HCT116 (cell line): ENCODE measurements at regions of chr1 and their contacts with region 1.

Region 1: DNA sequence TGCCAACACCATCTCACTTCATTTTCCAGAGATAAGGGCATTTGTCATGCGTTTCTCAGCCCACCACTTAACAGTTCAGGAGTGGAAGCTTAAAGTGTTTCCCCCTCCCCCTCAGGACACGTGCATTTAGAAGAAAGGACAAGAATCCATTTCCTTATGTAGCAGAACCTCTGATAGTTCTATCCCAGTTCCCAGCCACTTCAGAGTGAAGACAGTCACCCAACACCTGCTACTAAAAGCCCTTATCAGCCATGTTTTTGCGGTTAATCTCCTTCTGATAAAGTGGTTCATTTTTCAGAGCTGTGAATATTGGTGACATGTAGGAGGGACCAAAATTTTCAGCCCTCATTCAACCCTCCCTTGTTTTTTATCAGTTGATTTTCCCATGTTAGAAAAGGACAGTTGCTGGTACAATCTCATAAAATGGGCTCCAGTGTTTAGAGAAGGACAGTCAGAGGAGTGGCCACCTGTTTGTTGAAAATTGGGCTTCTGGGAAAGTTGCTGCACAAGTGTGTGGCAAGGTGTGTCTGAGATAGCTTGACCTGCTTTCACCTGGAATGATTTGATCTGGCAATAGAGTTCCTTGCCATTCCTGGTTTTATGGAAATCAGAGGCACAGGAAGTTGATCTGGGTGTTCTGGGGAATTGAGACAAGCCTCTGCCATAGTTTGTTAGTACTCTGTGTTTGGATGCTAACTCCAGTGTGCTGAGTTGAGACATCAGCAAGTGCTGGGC is 114.0 kb downstream of the PPP1R12B start:
- DNase-seq: no peak
- ATAC-seq: no peak
- H3K4me3 ChIP-seq: no peak overlapping the region
- H3K27ac ChIP-seq: no peak overlapping the region
- H3K4me1 ChIP-seq: peaks cover 0 to 28% of the 10 kb centered on the region in 2 experiments; a peak in 2 of 4 replicates
- H3K27me3 ChIP-seq: no peaks in the 10 kb centered on the region
- CTCF ChIP-seq: no peak
- POLR2A ChIP-seq: no peak
- RAD21 ChIP-seq: no peak

Region 2: DNA sequence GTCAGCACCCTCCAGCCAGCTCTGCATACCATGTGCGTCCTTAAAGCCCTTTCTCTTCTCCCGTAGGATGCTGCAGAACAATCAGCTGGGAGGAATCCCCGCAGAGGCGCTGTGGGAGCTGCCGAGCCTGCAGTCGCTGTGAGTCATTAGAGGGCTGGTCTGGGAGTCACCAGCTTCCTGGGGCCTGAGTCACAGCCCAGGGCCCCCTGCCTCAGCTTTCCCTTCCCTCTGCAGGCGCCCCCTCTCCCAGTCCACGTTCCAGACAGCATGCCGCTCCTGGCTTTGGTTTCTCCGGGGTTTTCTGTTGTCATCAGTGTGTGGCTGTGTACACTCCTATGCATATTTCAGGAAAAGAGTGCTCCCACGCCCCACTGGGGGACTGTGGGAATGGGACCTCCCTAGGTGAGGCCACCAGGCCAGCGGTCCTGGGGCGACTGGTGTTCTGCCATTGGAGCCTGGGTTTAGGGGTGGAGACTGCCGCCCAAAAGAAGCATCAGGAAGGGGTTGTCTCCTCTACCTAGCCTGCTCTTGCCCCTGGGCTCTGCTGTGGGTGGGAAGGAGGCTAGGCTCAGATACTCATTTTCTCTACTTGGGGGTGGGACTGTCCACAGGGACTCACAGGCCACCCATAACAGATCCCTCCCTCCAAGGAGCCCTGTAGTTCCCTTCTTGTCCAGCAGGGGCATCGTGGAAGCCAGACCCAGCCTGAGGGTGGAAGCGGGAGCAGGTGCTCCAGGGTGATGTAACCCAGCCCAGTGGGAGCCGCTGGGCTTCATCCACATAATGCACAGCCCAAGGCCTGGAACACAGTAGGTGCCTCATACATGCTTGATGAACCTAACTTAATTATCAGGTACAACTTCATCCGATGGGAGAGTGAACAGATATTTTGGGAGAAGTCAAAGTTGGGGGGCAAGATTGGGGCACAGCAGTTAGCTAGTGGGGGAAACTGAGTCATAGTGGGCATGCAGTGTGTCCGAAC is 226.4 kb before region 1 on chr1:
- CTCF ChIA-PET with region 1: no interaction called
- POLR2A ChIA-PET with region 1: no interaction called
- RAD21 ChIA-PET with region 1: no interaction called
- intact Hi-C with region 1: no loop called
- DNase-seq: peak; percentile 86
- ATAC-seq: peak; percentile 87
- H3K4me3 ChIP-seq: peak overlapping the region; percentile 26 to 46
- H3K27ac ChIP-seq: peak overlapping the region; percentile 37
- H3K4me1 ChIP-seq: peaks cover 25 to 30% of the 10 kb centered on the region in 2 experiments
- H3K27me3 ChIP-seq: peaks cover 12% of the 10 kb centered on the region; the same call in 1 of the 2 replicates
- CTCF ChIP-seq: peak; percentile 64 to 98 (median 95)
- POLR2A ChIP-seq: no peak
- RAD21 ChIP-seq: peak; percentile 35; the same call in 1 of the 2 replicates

Region 3: DNA sequence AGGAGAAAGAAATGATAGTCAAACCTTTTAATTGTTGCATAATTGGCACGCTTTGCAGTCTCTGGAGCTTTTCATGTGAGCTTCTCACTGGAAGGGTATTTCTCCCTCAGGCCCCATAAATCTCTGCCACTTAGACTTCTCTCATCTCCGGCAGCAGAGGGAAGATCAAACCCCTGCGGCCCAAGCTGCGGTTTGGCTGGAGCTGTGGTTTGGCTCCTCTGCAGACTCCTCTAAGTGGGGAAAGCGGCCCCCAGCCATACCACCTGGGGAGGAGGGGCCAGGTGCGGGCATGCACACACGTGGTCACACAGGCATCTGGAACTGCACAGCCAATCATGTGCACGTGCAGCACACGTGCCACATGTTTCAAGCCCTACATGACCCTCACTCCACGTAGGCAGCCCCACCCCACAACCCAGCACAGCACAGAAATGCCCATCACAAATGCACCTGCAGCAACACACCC is 179.1 kb before region 1 on chr1:
- CTCF ChIA-PET with region 1: no interaction called
- POLR2A ChIA-PET with region 1: no interaction called
- RAD21 ChIA-PET with region 1: no interaction called
- intact Hi-C with region 1: no loop called
- DNase-seq: peak; percentile 27
- ATAC-seq: peak; percentile 89
- H3K4me3 ChIP-seq: no peak overlapping the region
- H3K27ac ChIP-seq: no peak overlapping the region
- H3K4me1 ChIP-seq: peaks cover 13 to 16% of the 10 kb centered on the region in 2 experiments
- H3K27me3 ChIP-seq: peaks cover 85% of the 10 kb centered on the region
- CTCF ChIP-seq: no peak
- POLR2A ChIP-seq: no peak
- RAD21 ChIP-seq: no peak

Region 4: DNA sequence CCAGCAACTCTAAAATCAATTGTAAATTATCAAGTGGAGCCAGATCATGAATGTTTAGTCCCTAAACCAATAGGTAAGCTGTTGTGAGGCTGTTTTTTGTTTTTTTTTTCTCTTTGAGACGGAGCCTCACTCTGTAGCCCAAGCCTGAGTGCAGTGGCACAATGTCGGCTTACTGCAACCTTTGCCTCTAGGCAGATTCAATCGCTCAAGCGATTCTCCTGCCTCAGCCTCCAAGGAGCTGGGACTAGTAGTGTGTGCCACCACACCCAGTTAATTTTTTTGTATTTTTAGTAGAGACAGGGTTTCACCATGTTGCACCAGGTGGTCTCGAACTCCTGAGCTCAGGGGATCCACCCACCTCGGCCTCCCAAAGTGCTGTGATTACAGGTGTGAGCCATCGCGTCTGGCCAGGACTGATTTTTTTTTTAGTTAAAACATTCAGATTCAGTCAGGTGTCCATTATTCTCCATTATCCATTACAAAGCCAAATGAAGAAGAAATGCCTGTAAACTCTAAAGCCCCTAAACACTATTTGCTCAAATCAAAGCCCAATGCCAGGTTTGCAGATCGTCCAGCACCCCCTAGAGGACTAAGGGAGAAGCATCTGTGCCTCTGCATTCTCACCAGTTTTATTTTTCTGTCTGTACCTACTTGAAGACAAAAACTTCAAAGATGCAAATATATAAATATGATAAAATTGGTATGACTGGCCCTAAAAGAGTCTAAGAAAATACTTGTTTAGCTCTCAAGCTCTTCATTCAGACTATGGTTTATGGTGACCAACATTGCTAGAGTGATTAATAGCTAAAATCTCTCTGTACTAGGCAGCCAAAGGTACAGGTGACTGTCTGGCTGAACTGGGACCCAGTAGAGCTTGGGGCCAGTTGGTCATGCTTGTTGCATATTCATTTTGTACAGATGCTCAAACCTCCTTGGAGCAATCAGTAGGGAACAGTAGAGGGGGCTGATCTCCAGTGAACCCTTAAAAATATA is 109.1 kb after region 1 on chr1:
- CTCF ChIA-PET with region 1: no interaction called
- POLR2A ChIA-PET with region 1: no interaction called
- RAD21 ChIA-PET with region 1: no interaction called
- intact Hi-C with region 1: loop called (anchors 10 kb)
- DNase-seq: peak; percentile 13
- ATAC-seq: peak; percentile 73
- H3K4me3 ChIP-seq: no peak overlapping the region
- H3K27ac ChIP-seq: no peak overlapping the region
- H3K4me1 ChIP-seq: peaks cover 6 to 23% of the 10 kb centered on the region in 2 experiments; a peak in 3 of 4 replicates
- H3K27me3 ChIP-seq: no peaks in the 10 kb centered on the region
- CTCF ChIP-seq: peak; percentile 70 to 94 (median 86); a peak in 5 of 6 replicates
- POLR2A ChIP-seq: no peak
- RAD21 ChIP-seq: peak; percentile 81

Region 5: GRCh38 chr1:202599677-202600431 is 137.3 kb after region 1 on chr1:
- CTCF ChIA-PET with region 1: interaction called, 8 read pairs
- POLR2A ChIA-PET with region 1: no interaction called
- RAD21 ChIA-PET with region 1: no interaction called
- intact Hi-C with region 1: loop called (anchors 1 kb)
- DNase-seq: peak; percentile 34
- ATAC-seq: peak; percentile 99
- H3K4me3 ChIP-seq: no peak overlapping the region
- H3K27ac ChIP-seq: no peak overlapping the region
- H3K4me1 ChIP-seq: peaks cover 0 to 8% of the 10 kb centered on the region in 2 experiments; a peak in 1 of 4 replicates
- H3K27me3 ChIP-seq: no peaks in the 10 kb centered on the region
- CTCF ChIP-seq: peak; percentile 76 to 87 (median 81)
- POLR2A ChIP-seq: no peak
- RAD21 ChIP-seq: peak; percentile 94